Ascending aorta (tissue), 2 donors: ENCODE measurements at regions of chr1 and their contacts with region 1.

Region 1: DNA sequence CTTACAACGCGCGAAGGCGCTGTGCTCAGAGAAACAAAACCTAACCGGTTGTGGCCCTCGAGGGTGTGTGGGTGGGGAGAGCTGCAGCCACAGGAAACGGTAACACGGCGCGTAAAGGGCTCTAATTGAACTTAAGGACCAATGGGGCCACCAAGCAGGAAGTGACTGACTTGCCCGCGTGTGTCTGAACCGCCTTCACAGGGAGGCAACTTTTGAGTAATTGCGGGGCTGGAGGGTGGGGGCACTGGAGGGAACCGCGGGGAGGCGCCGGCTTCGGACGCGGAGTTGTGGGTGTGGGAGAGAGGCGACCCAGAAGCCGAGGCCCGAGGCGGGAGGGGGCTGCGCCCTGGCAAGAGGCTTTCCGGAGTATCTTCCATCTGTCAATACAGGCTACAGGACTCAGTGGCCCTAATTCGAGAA is 577 bp upstream of the PNRC2 start:
- DNase-seq: peak; percentile 88 to 95
- H3K4me3 ChIP-seq: peak overlapping the region; percentile 76 to 81
- H3K27ac ChIP-seq: peak overlapping the region; percentile 97 to 98
- H3K4me1 ChIP-seq: peaks cover 0 to 7% of the 10 kb centered on the region in 2 donors
- H3K27me3 ChIP-seq: no peaks in the 10 kb centered on the region
- CTCF ChIP-seq: peak in 2 of 3 experiments; percentile 35 to 57

Region 2: GRCh38 chr1:23800400-23801337 is 158.4 kb before region 1 on chr1 and contains the start of gene GALE:
- intact Hi-C with region 1: loop called (anchors 1 kb)
- DNase-seq: peak; percentile 87 to 98
- H3K4me3 ChIP-seq: peak within 1 kb of the TSS; percentile 82 to 93
- H3K27ac ChIP-seq: peak within 1 kb of the TSS; percentile 87 to 97
- H3K4me1 ChIP-seq: peaks cover 9 to 14% of the 10 kb centered on the region in 2 donors
- H3K27me3 ChIP-seq: no peaks in the 10 kb centered on the region
- CTCF ChIP-seq: no peak
- total RNA-seq, gene GALE: 30.4 TPM

Region 3: DNA sequence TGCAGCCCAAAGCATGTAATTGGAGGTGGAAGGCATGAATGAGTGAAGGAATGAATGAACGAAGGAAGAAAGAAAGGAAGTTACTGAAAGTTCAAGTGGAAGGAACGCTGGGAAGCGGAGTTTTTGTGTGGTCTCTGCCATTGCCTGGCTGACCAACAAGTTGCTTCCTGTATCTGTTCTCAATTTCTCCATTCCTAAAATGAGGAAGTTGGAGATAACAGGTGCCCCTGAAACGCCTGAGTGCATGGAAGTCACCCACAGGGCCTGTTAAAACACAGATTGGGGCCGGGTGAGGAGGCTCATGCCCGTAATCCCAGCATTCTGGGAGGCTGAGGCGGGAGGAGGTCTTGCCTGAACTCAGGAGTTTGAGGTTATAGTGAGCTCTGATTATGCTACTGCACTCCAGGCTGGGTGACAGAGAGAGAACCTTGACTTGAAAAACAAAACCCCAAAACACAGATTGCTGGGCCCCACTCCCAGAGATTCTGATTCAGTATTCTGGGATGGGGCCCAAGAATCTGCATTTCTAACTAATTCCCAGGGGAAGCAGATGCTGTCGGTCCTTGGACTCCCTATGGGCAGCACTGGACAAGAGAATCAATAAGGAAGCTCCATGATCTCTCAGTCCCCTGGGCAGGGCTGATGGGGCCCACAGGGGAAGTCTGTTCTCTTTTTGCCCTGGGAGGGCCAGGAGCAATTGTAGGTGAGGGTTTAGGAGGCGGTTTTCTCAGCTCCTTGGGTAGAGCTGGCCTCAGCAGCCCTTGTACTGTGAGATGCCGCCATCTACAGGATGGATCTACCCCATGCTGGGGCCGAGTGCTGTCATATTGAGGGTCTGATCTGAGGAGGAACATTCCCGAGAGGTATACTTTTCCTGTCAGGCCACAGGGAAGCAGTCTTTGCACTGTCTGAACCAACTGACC is 42.6 kb before region 1 on chr1:
- intact Hi-C with region 1: loop called (anchors 1 kb)
- DNase-seq: peak; percentile 15 to 78
- H3K4me3 ChIP-seq: no peak overlapping the region
- H3K27ac ChIP-seq: no peak overlapping the region
- H3K4me1 ChIP-seq: peaks cover 0 to 17% of the 10 kb centered on the region in 2 donors
- H3K27me3 ChIP-seq: no peaks in the 10 kb centered on the region
- CTCF ChIP-seq: peak; percentile 30 to 69 (median 61)

Region 4: DNA sequence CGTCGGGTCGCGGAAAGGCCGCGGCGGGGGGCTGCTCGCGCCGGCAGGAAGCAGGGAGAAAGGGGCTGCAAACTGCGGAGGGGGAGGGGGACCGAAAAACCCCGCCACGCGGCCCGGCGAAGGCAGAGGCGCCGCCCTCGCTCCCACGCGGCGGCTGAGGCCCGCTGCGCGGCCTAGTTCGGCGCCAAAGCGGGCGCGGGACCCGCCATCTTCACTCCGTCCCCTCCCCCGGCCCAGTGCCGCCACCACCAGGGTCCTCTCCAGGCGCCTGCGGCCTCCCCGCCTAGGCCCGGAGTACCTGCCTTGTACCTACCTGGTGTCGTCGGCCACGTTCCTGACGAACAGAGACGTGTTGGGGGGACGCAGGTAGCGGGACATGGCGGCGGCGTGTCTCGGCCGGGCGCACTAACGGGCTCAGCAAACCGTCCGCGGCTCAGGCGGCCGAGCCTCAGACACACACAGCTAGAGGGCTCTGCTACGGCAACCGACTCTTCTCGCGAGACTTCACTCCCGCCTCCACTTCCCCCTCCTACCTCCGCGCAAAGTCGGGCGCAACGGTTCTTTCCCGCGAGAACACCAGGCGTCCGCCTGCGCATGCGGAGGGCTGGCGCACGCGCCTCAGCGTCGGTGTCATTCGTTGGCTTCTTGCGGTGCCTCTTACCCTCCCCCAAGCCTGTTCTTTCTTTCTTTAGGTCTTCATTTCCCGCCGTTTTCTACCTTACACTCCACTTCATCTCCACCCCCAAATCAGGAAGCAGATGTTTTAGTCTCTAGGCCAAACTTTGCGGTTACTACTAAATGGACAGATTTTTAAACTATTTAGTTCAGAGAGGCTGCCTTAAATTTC is 21.1 kb after region 1 on chr1 and contains the start of gene SRSF10:
- intact Hi-C with region 1: loop called (anchors 1 kb)
- DNase-seq: peak; percentile 92 to 99
- H3K4me3 ChIP-seq: peak within 1 kb of the TSS; percentile 90 to 91
- H3K27ac ChIP-seq: peak within 1 kb of the TSS; percentile 96 to 98
- H3K4me1 ChIP-seq: peaks cover 3 to 32% of the 10 kb centered on the region in 2 donors
- H3K27me3 ChIP-seq: no peaks in the 10 kb centered on the region
- CTCF ChIP-seq: peak in 2 of 3 experiments; percentile 35 to 44
- total RNA-seq, gene SRSF10: 80.6 TPM

Region 5: DNA sequence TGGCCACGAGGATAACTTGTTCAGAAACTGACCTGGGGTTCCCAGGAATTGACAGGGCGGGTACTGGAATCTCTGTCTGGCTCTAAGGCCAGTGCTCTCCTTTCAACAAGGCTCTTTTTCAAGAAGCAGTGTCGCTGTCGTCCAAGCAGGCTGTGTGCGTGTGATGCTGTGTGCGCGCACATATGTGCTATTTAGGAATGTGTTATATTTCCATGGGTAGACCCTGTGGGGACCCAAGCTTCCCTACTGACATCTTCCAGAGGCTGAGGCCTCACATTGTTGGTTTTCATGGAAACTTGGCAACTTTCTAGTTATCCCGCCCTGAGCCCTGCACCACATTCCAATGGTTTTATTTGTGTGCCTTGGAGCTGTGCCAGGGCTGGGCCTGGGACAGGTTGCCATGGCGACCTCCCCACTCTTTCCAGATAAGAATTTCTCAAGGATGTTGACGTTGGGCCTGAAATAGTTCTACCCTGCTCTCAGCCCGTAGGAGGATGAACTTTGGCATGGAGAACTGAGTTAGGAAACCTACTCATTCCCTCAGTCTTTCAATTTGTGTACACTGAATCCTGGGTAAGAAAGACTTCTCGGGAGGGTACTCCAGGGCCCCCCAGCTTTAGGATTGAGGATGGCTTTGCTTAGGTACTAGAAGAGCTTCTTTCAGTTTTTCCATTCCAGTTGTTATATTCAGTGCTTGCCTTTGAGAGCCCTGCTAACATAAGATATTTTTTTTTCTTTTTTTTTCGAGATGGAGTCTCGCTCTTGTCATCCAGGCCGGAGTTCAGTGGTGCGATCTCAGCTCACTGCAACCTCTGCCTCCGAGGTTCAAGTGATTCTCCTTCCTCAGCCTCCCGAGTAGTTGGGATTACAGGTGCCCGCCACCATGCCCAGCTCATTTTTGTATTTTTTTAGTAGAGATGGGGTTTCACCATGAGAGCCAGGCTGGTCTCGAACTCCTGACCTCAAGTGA is 59.8 kb after region 1 on chr1:
- intact Hi-C with region 1: loop called (anchors 2 kb)
- DNase-seq: peak; percentile 83 to 99
- H3K4me3 ChIP-seq: peak overlapping the region in 1 of 2 donors; percentile 34
- H3K27ac ChIP-seq: peak overlapping the region; percentile 89 to 91
- H3K4me1 ChIP-seq: peaks cover 30 to 80% of the 10 kb centered on the region in 2 donors
- H3K27me3 ChIP-seq: no peaks in the 10 kb centered on the region
- CTCF ChIP-seq: no peak

Region 6: GRCh38 chr1:24027838-24028468 is 68.9 kb after region 1 on chr1:
- intact Hi-C with region 1: loop called (anchors 1 kb)
- DNase-seq: no peak
- H3K4me3 ChIP-seq: no peak overlapping the region
- H3K27ac ChIP-seq: no peak overlapping the region
- H3K4me1 ChIP-seq: peaks cover under 1 to 6% of the 10 kb centered on the region in 2 donors
- H3K27me3 ChIP-seq: no peaks in the 10 kb centered on the region
- CTCF ChIP-seq: peak; percentile 46 to 71 (median 65)

Region 7: DNA sequence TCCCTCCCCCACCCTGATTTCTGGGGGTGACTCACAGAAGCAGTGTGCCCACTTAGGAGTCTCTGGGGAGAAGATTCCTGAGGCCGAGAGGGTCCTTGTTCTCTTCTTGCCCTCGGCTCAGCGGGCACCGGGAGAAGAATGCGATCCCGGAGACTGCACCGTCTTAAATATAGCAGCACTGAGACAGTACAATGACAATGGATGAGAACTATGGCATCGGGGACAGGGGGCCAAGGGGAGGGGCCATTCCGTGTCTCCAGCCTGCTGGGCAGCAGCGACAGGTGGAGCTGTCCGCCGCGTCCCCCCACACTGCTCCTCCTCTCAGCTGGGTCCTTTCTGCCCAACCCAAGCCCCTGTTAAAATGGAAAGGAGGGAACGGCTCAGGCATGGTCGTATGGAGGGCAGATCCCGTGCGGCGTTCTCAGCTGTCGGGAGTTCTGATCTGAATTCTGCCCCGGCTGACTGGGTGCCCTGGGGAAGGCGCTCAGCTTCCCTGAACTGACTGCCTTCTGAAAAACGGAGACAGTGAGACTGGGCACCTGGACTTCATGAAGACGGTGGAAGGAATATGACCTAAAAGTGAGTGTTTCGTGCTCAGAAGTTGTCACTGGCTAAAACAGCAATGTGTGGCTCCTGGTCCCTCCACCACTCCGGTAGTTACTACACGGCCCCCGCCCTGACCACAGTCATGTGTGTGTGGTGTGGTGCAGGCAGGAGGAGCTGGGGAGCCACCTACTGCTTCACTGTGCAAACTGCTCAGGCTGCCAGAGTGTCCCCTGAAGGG is 153.1 kb after region 1 on chr1 and contains the start of gene MYOM3:
- intact Hi-C with region 1: loop called (anchors 10 kb)
- DNase-seq: peak; percentile 46 to 88
- H3K4me3 ChIP-seq: peak within 1 kb of the TSS; percentile 42 to 57
- H3K27ac ChIP-seq: peak within 1 kb of the TSS; percentile 89 to 96
- H3K4me1 ChIP-seq: peaks cover 12 to 21% of the 10 kb centered on the region in 2 donors
- H3K27me3 ChIP-seq: no peaks in the 10 kb centered on the region
- CTCF ChIP-seq: peak; percentile 66 to 82 (median 73)
- total RNA-seq, gene MYOM3: 1.2 TPM

Region 8: GRCh38 chr1:24142546-24143534 is 183.8 kb after region 1 on chr1 and contains the start of gene IL22RA1:
- intact Hi-C with region 1: no loop called
- DNase-seq: no peak
- H3K4me3 ChIP-seq: peak within 1 kb of the TSS; percentile 36 to 54
- H3K27ac ChIP-seq: no peak within 1 kb of the TSS
- H3K4me1 ChIP-seq: no peaks in the 10 kb centered on the region
- H3K27me3 ChIP-seq: no peaks in the 10 kb centered on the region
- CTCF ChIP-seq: no peak
- total RNA-seq, gene IL22RA1: not detected